Esophagus squamous epithelium (tissue), 5 donors: ENCODE measurements at regions of chr19 and their contacts with region 1.

Region 1: GRCh38 chr19:1672038-1672768 is 19.8 kb upstream of the TCF3 start:
- DNase-seq: no peak
- H3K4me3 ChIP-seq: peak overlapping the region in 2 of 4 donors; percentile 19 to 49
- H3K27ac ChIP-seq: no peak overlapping the region
- H3K4me1 ChIP-seq: peaks cover 13 to 44% (median 21%) of the 10 kb centered on the region in 3 donors
- H3K27me3 ChIP-seq: peaks cover 13 to 100% (median 42%) of the 10 kb centered on the region in 4 donors
- CTCF ChIP-seq: peak; percentile 78 to 92 (median 82)
- POLR2A ChIP-seq: no peak

Region 2: GRCh38 chr19:1549332-1549945 is 122.8 kb before region 1 on chr19:
- intact Hi-C with region 1: loop called (anchors 5 kb)
- DNase-seq: no peak
- H3K4me3 ChIP-seq: no peak overlapping the region
- H3K27ac ChIP-seq: no peak overlapping the region
- H3K4me1 ChIP-seq: peaks cover 0 to 6% (median 4%) of the 10 kb centered on the region in 3 donors
- H3K27me3 ChIP-seq: peaks cover 0 to 16% (median 0%) of the 10 kb centered on the region in 4 donors
- CTCF ChIP-seq: no peak
- POLR2A ChIP-seq: no peak

Region 3: GRCh38 chr19:1734321-1734966 is 62.2 kb after region 1 on chr19:
- intact Hi-C with region 1: no loop called
- DNase-seq: no peak
- H3K4me3 ChIP-seq: no peak overlapping the region
- H3K27ac ChIP-seq: no peak overlapping the region
- H3K4me1 ChIP-seq: no peaks in the 10 kb centered on the region
- H3K27me3 ChIP-seq: peaks cover 0 to 100% (median 9%) of the 10 kb centered on the region in 4 donors
- CTCF ChIP-seq: no peak
- POLR2A ChIP-seq: no peak

Region 4: DNA sequence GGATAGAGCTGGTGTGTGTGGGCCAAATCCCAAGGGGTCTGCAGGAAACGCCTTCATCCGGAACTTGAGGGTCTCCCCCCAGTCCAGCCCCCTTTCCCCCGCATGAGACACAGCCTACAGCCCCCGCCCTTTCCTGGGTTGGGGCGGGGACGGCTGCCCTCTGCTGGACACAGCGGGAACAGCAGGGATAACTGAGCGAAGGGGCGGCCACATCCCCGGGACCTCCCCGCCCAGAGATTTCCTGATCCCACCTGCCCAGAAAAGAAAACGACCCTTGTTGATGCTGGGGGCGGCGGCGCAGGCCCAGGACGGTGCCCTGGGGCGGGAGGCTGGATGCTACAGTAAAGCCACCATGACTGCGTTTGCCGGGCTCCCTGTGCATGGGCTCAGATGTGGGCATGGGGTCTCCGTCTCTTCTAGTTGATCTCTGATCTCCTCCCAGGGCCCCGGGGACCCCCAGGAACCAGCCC is 95.3 kb after region 1 on chr19:
- intact Hi-C with region 1: loop called (anchors 5 kb)
- DNase-seq: no peak
- H3K4me3 ChIP-seq: no peak overlapping the region
- H3K27ac ChIP-seq: no peak overlapping the region
- H3K4me1 ChIP-seq: peaks cover 0 to 7% (median 4%) of the 10 kb centered on the region in 3 donors
- H3K27me3 ChIP-seq: peaks cover 9 to 99% (median 54%) of the 10 kb centered on the region in 4 donors
- CTCF ChIP-seq: peak; percentile 87 to 99 (median 93)
- POLR2A ChIP-seq: no peak

Region 5: DNA sequence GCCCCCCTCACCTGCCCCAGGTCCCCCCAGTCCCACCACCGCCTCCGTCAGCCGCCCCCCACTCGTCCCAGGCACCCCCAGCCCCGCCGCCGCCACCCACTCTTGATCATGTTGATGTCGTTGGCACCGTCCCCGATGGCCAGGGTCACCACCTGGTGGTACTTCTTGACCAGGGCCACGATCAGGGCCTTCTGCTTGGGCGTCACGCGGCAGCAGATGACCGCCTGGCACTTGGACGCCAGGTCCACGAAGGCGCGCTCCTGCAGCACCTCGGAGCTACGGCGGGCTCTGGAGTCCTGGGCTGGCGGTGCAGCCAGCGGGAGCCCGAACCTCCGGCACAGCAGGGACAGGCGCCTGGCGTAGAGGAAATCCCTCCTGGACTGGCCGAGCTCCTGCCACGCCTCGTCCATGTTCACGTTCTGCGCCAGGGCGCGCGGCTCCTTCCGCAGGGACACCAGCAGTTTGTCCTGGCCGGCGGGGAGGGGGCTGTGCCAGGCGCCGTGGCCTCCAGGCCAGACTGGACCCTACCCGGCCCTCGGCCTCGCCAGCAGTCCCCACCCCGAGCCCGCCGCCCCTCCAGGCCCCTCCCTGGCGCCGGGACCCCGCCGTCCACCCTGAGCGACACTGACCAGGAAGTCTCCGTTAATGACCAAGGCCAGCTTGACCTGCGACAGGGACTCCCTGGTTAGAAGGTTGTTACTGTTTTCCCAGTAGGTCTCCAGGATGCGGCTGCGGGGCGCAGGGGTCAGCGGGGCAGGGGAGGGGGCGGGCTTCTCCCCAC is 117.2 kb after region 1 on chr19:
- intact Hi-C with region 1: loop called (anchors 10 kb)
- DNase-seq: no peak
- H3K4me3 ChIP-seq: peak overlapping the region in 3 of 4 donors; percentile 17 to 40 (median 19)
- H3K27ac ChIP-seq: no peak overlapping the region
- H3K4me1 ChIP-seq: peaks cover 0 to 15% (median 11%) of the 10 kb centered on the region in 3 donors
- H3K27me3 ChIP-seq: peaks cover 0 to 79% (median 2%) of the 10 kb centered on the region in 4 donors
- CTCF ChIP-seq: no peak
- POLR2A ChIP-seq: no peak

Region 6: DNA sequence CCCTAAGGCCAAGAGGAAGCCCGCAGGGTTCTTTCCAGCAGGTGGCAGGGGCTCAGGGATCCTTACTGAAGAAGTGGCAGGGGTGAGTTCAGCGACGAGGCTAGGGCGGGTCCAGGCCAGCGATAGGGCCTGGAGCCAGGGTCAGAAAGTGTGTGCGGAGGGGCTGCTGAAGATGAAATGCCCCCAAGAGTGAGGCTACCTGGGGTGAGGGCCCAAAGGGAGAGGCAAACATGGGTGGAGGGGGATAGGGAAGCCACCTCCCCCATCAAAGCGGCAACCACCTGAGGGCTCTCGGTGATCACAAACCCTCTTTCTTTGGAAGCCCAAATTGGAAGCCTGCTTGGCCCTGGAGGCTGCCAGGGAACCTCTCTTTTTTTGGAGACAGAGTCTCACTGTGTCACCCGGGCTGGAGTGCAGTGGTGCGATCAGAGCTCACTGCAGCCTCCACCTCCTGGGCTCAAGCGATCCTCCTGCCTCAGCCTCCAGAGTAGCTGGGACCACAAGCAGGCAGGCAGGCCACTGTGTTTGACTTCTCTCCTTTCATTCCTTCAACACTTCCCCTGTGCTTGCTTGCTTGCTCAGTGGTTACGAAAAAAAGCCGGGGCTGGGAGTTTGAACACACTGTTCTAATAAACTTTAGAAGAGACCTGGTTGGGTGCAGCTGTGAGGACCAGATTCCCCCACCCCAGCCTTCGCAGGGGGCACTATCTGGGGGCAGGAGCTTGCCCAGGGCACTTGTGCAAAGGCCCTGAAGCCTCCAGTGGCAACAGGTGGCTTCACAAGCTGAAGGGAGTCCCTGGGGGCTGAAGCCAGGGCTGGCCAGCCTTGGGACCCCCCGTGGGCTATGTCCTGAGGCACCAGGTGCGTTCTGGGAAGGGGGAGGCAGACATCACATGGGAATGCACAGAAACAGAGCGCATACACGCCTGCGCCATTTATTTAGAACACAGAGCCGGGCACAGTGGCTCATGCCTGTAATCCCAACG is 141.3 kb after region 1 on chr19:
- intact Hi-C with region 1: no loop called
- DNase-seq: no peak
- H3K4me3 ChIP-seq: peak overlapping the region; percentile 30 to 65 (median 57)
- H3K27ac ChIP-seq: peak overlapping the region; percentile 80 to 89 (median 84)
- H3K4me1 ChIP-seq: peaks cover 18 to 46% (median 25%) of the 10 kb centered on the region in 3 donors
- H3K27me3 ChIP-seq: no peaks in the 10 kb centered on the region
- CTCF ChIP-seq: no peak
- POLR2A ChIP-seq: no peak